Gastrocnemius medialis (tissue), 4 donors: ENCODE measurements at regions of chrX and their contacts with region 1.

Region 1: DNA sequence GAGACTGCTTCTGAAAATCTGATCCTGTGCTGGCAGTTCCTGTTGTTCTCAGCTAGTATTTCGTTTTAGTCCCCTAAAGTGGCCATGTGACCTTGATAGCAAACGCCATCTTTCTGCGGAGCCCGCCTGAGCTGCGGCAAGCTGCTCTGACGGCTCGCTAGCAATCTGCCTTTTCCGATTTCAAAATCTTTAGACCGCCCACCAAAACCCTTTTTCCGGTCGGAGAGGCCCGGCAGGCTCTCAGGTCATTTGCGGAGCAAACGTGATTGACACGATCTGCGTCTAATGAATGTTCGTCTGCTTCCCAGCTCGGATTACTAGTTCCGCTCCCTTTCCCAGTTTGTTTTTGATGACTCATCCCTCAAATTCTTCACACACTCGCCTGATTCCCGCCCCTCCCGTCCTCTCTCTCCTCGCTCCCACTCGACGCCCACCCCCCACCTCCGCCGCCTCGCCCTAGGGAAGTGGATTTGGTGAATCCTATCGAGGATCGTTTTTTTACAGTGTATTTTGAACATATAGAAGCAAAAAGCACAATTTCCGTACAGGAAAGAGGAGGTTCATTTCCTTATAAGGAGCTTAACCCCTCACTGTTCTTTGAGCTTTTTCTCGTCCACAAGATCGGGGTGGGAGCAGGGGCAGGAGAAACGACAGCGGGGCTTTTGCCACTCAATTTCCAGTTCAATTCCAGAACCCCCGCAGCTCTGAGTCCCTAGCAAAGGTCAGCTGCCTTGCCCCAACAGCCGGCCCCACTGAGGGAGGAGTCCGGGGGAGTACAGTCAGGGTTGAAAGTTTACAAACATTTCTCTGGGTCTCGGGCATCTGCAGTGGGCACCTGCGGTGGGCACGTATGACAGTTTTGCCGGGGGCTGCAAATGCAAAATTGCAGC is 37.5 kb downstream of the NLGN3 start:
- DNase-seq: peak; percentile 84 to 91
- ATAC-seq: peak; percentile 99
- H3K4me3 ChIP-seq: peak overlapping the region; percentile 57 to 64 (median 60)
- H3K27ac ChIP-seq: peak overlapping the region; percentile 86 to 91 (median 90)
- H3K4me1 ChIP-seq: no peaks in the 10 kb centered on the region
- H3K27me3 ChIP-seq: no peaks in the 10 kb centered on the region
- CTCF ChIP-seq: no peak
- POLR2A ChIP-seq: peak; percentile 74 to 75

Region 2: DNA sequence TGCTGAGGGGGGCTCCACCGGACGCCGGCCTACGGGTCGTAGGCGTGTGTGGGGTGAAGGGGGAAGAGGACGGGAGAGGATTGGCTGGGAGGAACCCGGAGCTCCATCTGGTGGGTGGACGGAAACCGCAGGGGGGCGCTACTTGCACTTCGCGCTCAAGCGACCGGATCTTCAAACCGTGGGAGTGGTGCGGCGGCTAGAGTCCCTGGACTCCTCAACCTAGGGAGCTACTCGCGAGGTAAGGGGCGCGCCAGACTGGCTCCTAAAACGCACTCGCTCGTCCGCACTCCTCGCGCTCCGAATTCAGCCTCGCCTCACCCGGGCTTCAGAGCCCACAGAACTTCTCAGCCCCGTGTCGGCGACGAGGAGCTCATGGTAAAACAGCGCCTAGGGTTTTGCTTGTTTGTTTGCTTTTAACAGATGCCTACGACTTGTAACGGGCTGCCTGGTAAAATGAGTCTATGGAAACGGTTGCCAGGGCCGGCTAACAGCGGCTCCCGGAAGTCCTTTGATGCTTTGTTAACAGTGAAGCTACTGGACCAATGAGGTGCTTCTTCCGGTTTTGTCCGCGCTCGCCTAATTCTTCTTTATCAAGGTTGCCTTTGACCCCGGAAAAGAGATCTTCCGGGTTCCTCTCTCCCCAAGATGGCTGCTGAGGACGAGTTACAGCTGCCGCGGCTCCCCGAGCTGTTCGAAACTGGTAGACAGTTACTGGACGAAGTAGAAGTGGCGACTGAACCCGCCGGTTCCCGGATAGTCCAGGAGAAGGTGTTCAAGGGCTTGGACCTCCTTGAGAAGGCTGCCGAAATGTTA is 1048.6 kb before region 1 on chrX and contains the start of gene IGBP1:
- in situ Hi-C with region 1: no loop called
- intact Hi-C with region 1: loop called (anchors 5 kb)
- DNase-seq: peak; percentile 72 to 81
- ATAC-seq: peak; percentile 99
- H3K4me3 ChIP-seq: peak within 1 kb of the TSS; percentile 60 to 96 (median 86)
- H3K27ac ChIP-seq: peak within 1 kb of the TSS; percentile 71 to 90 (median 81)
- H3K4me1 ChIP-seq: peaks cover 5 to 7% of the 10 kb centered on the region in 2 donors
- H3K27me3 ChIP-seq: no peaks in the 10 kb centered on the region
- CTCF ChIP-seq: peak; percentile 34 to 68 (median 56)
- POLR2A ChIP-seq: peak; percentile 11 to 35
- total RNA-seq, gene IGBP1: 68.7 to 109 (median 75.1) TPM

Region 3: DNA sequence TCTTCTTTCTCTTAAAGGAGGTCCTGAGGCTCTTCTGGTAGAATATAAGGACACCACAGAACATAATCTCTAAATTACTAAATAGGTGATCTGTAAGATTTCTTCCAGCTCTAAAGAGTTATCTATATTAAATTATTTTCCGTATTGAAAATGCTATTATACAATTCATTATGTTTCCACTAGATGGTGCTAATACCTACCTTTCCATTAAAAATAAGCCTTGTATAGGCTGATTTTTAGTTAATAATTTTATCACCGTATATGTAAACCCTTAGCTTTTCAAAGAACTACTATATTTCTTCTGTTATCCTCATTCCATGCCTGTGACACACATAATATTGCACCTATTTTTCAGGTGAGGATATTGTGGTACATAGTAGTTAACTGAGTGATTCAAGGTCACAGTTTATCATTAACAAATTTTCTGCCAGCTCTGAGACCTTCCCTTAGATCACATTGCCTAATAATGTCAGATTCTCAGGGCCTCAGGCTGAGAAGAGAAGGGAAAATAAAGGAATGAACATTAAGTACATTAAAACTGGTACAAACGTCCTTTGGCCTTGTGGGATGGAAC is 412.4 kb before region 1 on chrX:
- in situ Hi-C with region 1: loop called (anchors 5 to 25 kb)
- intact Hi-C with region 1: loop called (anchors 2 kb)
- DNase-seq: no peak
- ATAC-seq: no peak
- H3K4me3 ChIP-seq: no peak overlapping the region
- H3K27ac ChIP-seq: no peak overlapping the region
- H3K4me1 ChIP-seq: no peaks in the 10 kb centered on the region
- H3K27me3 ChIP-seq: no peaks in the 10 kb centered on the region
- CTCF ChIP-seq: peak in 2 of 5 experiments; percentile 11 to 42
- POLR2A ChIP-seq: no peak

Region 4: GRCh38 chrX:71095543-71095911 is 86.6 kb before region 1 on chrX and contains the start of gene FOXO4:
- in situ Hi-C with region 1: no loop called
- intact Hi-C with region 1: loop called (anchors 2 kb)
- DNase-seq: peak; percentile 85 to 86
- ATAC-seq: peak; percentile 95 to 96
- H3K4me3 ChIP-seq: peak within 1 kb of the TSS; percentile 62 to 71 (median 66)
- H3K27ac ChIP-seq: peak within 1 kb of the TSS; percentile 74 to 87 (median 84)
- H3K4me1 ChIP-seq: peaks cover 9% of the 10 kb centered on the region in 2 donors
- H3K27me3 ChIP-seq: no peaks in the 10 kb centered on the region
- CTCF ChIP-seq: no peak
- POLR2A ChIP-seq: peak; percentile 11 to 38
- total RNA-seq, gene FOXO4: 35.2 to 48.0 (median 41.8) TPM

Region 5: GRCh38 chrX:71128915-71129765 is 53.0 kb before region 1 on chrX:
- in situ Hi-C with region 1: no loop called
- intact Hi-C with region 1: no loop called
- DNase-seq: peak; percentile 6 to 31
- ATAC-seq: peak in 1 of 2 donors; percentile 60
- H3K4me3 ChIP-seq: no peak overlapping the region
- H3K27ac ChIP-seq: no peak overlapping the region
- H3K4me1 ChIP-seq: no peaks in the 10 kb centered on the region
- H3K27me3 ChIP-seq: no peaks in the 10 kb centered on the region
- CTCF ChIP-seq: peak; percentile 21 to 61 (median 46)
- POLR2A ChIP-seq: no peak

Region 6: GRCh38 chrX:71144651-71145050 is 37.5 kb before region 1 on chrX and contains the start of gene NLGN3:
- in situ Hi-C with region 1: no loop called
- intact Hi-C with region 1: no loop called
- DNase-seq: no peak
- ATAC-seq: no peak
- H3K4me3 ChIP-seq: peak within 1 kb of the TSS in 2 of 4 donors; percentile 23 to 27
- H3K27ac ChIP-seq: no peak within 1 kb of the TSS
- H3K4me1 ChIP-seq: peaks cover 0 to 3% of the 10 kb centered on the region in 2 donors
- H3K27me3 ChIP-seq: no peaks in the 10 kb centered on the region
- CTCF ChIP-seq: no peak
- POLR2A ChIP-seq: no peak
- total RNA-seq, gene NLGN3: 0.31 to 0.39 (median 0.31) TPM in 3 of 4 donors, not detected in the other

Region 7: GRCh38 chrX:71198066-71198465 is 15.9 kb after region 1 on chrX:
- in situ Hi-C with region 1: no loop called
- intact Hi-C with region 1: no loop called
- DNase-seq: no peak
- ATAC-seq: no peak
- H3K4me3 ChIP-seq: no peak overlapping the region
- H3K27ac ChIP-seq: no peak overlapping the region
- H3K4me1 ChIP-seq: no peaks in the 10 kb centered on the region
- H3K27me3 ChIP-seq: no peaks in the 10 kb centered on the region
- CTCF ChIP-seq: no peak
- POLR2A ChIP-seq: no peak

Region 8: GRCh38 chrX:71254092-71254941 is 72.2 kb after region 1 on chrX and contains the start of gene ZMYM3:
- in situ Hi-C with region 1: no loop called
- intact Hi-C with region 1: loop called (anchors 5 kb)
- DNase-seq: peak; percentile 73 to 85
- ATAC-seq: peak; percentile 83 to 90
- H3K4me3 ChIP-seq: peak within 1 kb of the TSS; percentile 69 to 85 (median 82)
- H3K27ac ChIP-seq: peak within 1 kb of the TSS; percentile 88 to 94 (median 94)
- H3K4me1 ChIP-seq: peaks cover 0 to 8% of the 10 kb centered on the region in 2 donors
- H3K27me3 ChIP-seq: no peaks in the 10 kb centered on the region
- CTCF ChIP-seq: peak in 1 of 5 experiments; percentile 22
- POLR2A ChIP-seq: peak; percentile 48 to 53
- total RNA-seq, gene ZMYM3: 7.1 to 10.2 (median 8.9) TPM

Region 9: GRCh38 chrX:71846429-71846828 is 664.3 kb after region 1 on chrX:
- in situ Hi-C with region 1: no loop called
- intact Hi-C with region 1: no loop called
- DNase-seq: no peak
- ATAC-seq: no peak
- H3K4me3 ChIP-seq: no peak overlapping the region
- H3K27ac ChIP-seq: no peak overlapping the region
- H3K4me1 ChIP-seq: no peaks in the 10 kb centered on the region
- H3K27me3 ChIP-seq: peaks cover 0 to 11% (median 0%) of the 10 kb centered on the region in 3 donors
- CTCF ChIP-seq: no peak
- POLR2A ChIP-seq: no peak